Stomach (tissue), 19 donors: ENCODE measurements at regions of chr14 and their contacts with region 1.

Region 1: GRCh38 chr14:89033756-89034155 is 209.3 kb downstream of the TTC8 start:
- DNase-seq: peak in 1 of 2 donors; percentile 51
- H3K4me3 ChIP-seq: no peak overlapping the region
- H3K27ac ChIP-seq: no peak overlapping the region
- H3K4me1 ChIP-seq: no peaks in the 10 kb centered on the region
- H3K27me3 ChIP-seq: peaks cover 0 to 21% (median 0%) of the 10 kb centered on the region in 3 donors
- CTCF ChIP-seq: no peak
- EP300 ChIP-seq: no peak
- POLR2A ChIP-seq: no peak

Region 2: DNA sequence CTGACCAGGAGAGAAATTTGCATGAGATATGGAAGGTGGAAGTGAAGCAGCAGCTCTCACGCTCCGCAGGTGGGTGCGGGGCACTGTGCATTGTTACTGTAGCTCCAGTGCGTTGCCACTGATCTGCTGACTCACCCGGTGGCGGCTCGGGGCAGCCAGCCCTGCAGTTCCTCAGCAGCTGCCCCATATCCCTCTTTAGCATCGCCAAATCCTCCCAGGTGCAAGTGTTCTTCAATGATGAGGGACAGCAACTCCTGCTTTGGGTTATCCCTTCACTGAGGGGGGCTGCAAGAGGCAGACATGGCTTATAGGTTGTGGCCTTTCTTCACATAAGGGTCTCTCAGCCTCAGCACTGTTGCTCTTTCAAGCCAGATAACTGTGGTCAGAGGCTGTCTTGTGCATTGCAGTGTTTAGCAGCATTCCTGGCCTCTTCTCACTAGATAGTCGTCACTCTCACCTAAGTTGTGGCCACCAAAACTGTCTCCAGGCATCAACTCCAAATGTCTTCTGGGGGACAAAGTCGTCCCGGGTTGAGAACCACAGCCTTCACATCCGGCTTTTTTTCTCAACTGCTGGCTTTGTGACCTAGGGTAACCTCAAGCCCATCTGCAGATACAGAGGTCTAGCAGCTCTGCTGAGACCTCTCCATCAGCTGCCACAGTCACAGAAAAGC is 740.0 kb after region 1 on chr14:
- intact Hi-C with region 1: loop called (anchors 10 kb)
- DNase-seq: peak; percentile 80 to 86
- H3K4me3 ChIP-seq: no peak overlapping the region
- H3K27ac ChIP-seq: no peak overlapping the region
- H3K4me1 ChIP-seq: peaks cover 7 to 21% (median 16%) of the 10 kb centered on the region in 4 donors
- H3K27me3 ChIP-seq: no peaks in the 10 kb centered on the region
- CTCF ChIP-seq: no peak
- EP300 ChIP-seq: no peak
- POLR2A ChIP-seq: no peak